CD8-positive, alpha-beta T cell (primary cell): ENCODE measurements at regions of chr16 and their contacts with region 1.

Region 1: GRCh38 chr16:56576585-56577293 is 11.9 kb downstream of the MT4 start:
- DNase-seq: peak; percentile 77 to 91 (median 85)
- ATAC-seq: peak; percentile 99
- H3K4me3 ChIP-seq: no peak overlapping the region
- H3K4me3 Mint-ChIP-seq: no peak overlapping the region
- H3K27ac ChIP-seq: no peak overlapping the region
- H3K27ac Mint-ChIP-seq: peak overlapping the region; percentile 72
- H3K4me1 ChIP-seq: peaks cover 4% of the 10 kb centered on the region
- H3K4me1 Mint-ChIP-seq: peaks cover 8% of the 10 kb centered on the region
- H3K27me3 ChIP-seq: no peaks in the 10 kb centered on the region
- H3K27me3 Mint-ChIP-seq: no peaks in the 10 kb centered on the region
- CTCF ChIP-seq: peak; percentile 82

Region 2: DNA sequence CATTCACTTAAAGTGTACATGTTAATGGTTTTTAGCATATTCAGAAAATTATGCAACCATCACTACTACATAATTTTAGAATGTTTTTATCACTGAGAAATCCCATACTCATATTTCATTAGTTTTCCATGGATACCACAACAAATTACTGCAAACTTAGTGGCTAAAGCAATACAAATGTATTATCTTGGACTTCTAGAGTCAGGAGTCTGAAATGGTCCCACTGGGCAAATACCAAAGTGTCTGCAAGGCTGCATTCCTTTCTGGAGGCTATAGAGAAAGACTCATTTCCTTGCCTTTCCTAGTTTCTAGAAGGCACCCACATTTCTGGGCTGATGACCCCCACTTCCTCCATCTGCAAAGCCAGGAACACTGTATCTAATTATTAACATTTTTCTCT is 402.3 kb before region 1 on chr16:
- CTCF ChIA-PET with region 1: no interaction called
- POLR2A ChIA-PET with region 1: no interaction called
- intact Hi-C with region 1: no loop called
- DNase-seq: no peak
- ATAC-seq: no peak
- H3K4me3 ChIP-seq: no peak overlapping the region
- H3K4me3 Mint-ChIP-seq: no peak overlapping the region
- H3K27ac ChIP-seq: no peak overlapping the region
- H3K27ac Mint-ChIP-seq: no peak overlapping the region
- H3K4me1 ChIP-seq: no peaks in the 10 kb centered on the region
- H3K4me1 Mint-ChIP-seq: no peaks in the 10 kb centered on the region
- H3K27me3 ChIP-seq: no peaks in the 10 kb centered on the region
- H3K27me3 Mint-ChIP-seq: peaks cover 11% of the 10 kb centered on the region
- CTCF ChIP-seq: no peak

Region 3: DNA sequence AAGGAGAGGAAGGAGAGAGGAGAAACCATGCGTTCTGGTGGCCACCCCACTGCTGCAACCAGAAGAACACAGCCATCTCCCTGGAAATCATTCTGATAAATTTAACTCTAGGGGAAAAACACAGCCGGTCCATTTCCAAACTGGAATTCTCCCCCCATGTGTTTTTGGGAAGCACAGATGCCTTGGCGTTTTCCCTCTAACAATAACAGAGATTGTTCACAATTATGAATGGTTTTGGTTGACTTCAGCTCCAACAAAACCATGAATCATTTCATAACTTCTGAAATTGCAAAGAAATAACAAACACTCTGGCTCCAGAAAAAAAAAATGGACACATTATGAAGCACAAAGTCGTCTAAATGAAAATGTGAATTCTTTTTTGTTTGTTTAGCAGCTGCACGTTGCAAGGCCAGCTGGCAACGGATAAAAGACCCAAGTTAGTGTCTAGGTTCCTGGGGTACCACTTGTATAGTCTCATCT is 339.2 kb before region 1 on chr16:
- CTCF ChIA-PET with region 1: no interaction called
- POLR2A ChIA-PET with region 1: no interaction called
- intact Hi-C with region 1: no loop called
- DNase-seq: no peak
- ATAC-seq: no peak
- H3K4me3 ChIP-seq: no peak overlapping the region
- H3K4me3 Mint-ChIP-seq: no peak overlapping the region
- H3K27ac ChIP-seq: no peak overlapping the region
- H3K27ac Mint-ChIP-seq: no peak overlapping the region
- H3K4me1 ChIP-seq: no peaks in the 10 kb centered on the region
- H3K4me1 Mint-ChIP-seq: no peaks in the 10 kb centered on the region
- H3K27me3 ChIP-seq: no peaks in the 10 kb centered on the region
- H3K27me3 Mint-ChIP-seq: no peaks in the 10 kb centered on the region
- CTCF ChIP-seq: no peak

Region 4: GRCh38 chr16:56513972-56514371 is 62.8 kb before region 1 on chr16:
- CTCF ChIA-PET with region 1: interaction called, 12 read pairs
- POLR2A ChIA-PET with region 1: no interaction called
- intact Hi-C with region 1: loop called in 1 of 2 experiments (anchors 2 kb)
- DNase-seq: peak in 8 of 9 experiments; percentile 9 to 76 (median 52)
- ATAC-seq: peak; percentile 94
- H3K4me3 ChIP-seq: no peak overlapping the region
- H3K4me3 Mint-ChIP-seq: no peak overlapping the region
- H3K27ac ChIP-seq: no peak overlapping the region
- H3K27ac Mint-ChIP-seq: peak overlapping the region; percentile 7
- H3K4me1 ChIP-seq: peaks cover 33% of the 10 kb centered on the region
- H3K4me1 Mint-ChIP-seq: peaks cover 58% of the 10 kb centered on the region
- H3K27me3 ChIP-seq: no peaks in the 10 kb centered on the region
- H3K27me3 Mint-ChIP-seq: no peaks in the 10 kb centered on the region
- CTCF ChIP-seq: peak; percentile 80

Region 5: DNA sequence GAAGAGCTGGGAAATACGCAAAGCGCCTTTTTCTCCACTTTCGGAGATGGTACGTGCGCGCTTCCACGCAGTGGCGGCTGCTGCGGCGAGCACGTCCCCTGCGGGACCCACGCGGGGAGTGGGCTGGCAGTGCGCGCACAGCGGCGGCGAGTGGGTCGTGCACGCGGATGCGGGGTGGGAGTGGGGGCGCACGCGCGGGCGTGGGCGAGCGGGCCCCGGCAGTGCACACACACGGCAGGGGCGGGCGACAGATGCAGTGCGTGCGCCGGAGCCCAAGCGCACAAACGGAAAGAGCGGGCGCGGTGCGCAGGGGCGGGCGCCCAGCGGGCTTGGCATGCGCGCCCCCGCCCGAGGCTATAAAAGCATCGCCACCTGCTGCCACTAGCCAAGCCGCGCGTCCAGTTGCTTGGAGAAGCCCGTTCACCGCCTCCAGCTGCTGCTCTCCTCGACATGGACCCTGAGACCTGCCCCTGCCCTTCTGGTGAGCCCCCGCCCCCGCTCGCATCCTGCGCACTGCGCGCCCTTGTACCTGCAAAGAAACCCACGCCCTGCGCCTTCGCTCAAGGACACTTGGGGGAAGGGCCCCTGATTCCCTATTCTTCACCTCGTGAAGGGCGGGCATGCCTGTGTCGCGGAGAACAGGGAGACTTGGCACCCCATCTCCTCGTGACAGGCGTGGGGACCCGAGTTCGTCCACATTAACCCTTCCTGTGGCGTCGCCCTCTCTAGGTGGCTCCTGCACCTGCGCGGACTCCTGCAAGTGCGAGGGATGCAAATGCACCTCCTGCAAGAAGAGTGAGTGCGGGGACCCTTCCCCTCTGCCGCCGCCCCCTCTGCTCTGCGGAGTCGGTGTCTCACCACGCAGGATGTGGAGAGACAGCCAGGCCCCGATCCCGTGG is 12.7 kb after region 1 on chr16 and contains the start of gene MT3:
- CTCF ChIA-PET with region 1: interaction called, 18 read pairs
- POLR2A ChIA-PET with region 1: no interaction called
- intact Hi-C with region 1: no loop called
- DNase-seq: peak in 6 of 9 experiments; percentile 17 to 65 (median 35)
- ATAC-seq: peak; percentile 79
- H3K4me3 ChIP-seq: peak within 1 kb of the TSS; percentile 46 to 84
- H3K4me3 Mint-ChIP-seq: peak within 1 kb of the TSS; percentile 85
- H3K27ac ChIP-seq: no peak within 1 kb of the TSS
- H3K27ac Mint-ChIP-seq: no peak within 1 kb of the TSS
- H3K4me1 ChIP-seq: peaks cover 13% of the 10 kb centered on the region
- H3K4me1 Mint-ChIP-seq: peaks cover 13% of the 10 kb centered on the region
- H3K27me3 ChIP-seq: peaks cover 0 to 3% of the 10 kb centered on the region in 2 experiments
- H3K27me3 Mint-ChIP-seq: peaks cover 17% of the 10 kb centered on the region
- CTCF ChIP-seq: no peak
- total RNA-seq, gene MT3: 1.00 to 1.8 TPM

Region 6: DNA sequence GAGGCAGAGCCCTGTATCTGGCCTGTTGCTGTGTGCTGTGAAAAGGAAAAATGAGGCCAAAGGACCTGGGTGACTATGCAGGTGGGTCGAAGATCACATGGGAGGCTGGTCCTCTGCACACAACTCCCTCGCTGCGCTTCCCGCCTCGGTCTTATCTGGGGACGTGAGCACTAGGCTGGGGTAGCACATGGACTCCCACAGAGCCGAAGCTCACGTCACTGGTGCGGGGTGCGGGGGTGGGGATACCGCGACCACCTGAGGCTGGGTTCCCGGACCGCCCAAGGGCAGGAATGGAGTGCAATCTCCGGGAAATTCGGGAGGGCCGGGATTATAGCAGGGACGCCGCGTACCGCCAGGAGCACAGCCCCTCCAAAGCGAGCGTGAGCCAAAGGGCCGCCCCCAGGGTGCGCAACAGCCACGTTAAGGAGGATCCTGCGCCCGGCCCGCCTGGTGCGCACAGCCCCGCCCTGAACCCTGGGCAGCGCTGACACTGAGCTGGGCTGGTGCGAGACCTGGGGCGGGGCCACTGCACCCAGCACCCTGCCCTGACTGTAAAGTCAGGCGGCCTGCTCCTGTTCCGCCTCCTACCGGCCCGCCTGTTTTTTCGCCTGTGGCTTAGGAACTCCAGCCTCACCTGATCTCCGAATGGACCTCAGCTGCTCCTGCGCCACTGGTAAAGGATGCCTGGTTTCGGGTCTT is 66.5 kb after region 1 on chr16:
- CTCF ChIA-PET with region 1: interaction called, 13 read pairs
- POLR2A ChIA-PET with region 1: no interaction called
- intact Hi-C with region 1: loop called (anchors 1 to 2 kb)
- DNase-seq: peak; percentile 52 to 92 (median 77)
- ATAC-seq: peak; percentile 99
- H3K4me3 ChIP-seq: peak overlapping the region; percentile 33 to 47
- H3K4me3 Mint-ChIP-seq: peak overlapping the region; percentile 71
- H3K27ac ChIP-seq: peak overlapping the region in 1 of 2 experiments; percentile 3
- H3K27ac Mint-ChIP-seq: no peak overlapping the region
- H3K4me1 ChIP-seq: peaks cover 11% of the 10 kb centered on the region
- H3K4me1 Mint-ChIP-seq: peaks cover 23% of the 10 kb centered on the region
- H3K27me3 ChIP-seq: peaks cover 3 to 5% of the 10 kb centered on the region in 2 experiments
- H3K27me3 Mint-ChIP-seq: peaks cover 23% of the 10 kb centered on the region
- CTCF ChIP-seq: peak; percentile 19

Region 7: GRCh38 chr16:56708525-56709442 is 132.0 kb after region 1 on chr16:
- CTCF ChIA-PET with region 1: interaction called, 129 read pairs
- POLR2A ChIA-PET with region 1: interaction called, 11 read pairs
- intact Hi-C with region 1: no loop called
- DNase-seq: peak in 8 of 9 experiments; percentile 32 to 82 (median 58)
- ATAC-seq: peak; percentile 90
- H3K4me3 ChIP-seq: peak overlapping the region; percentile 53 to 65
- H3K4me3 Mint-ChIP-seq: peak overlapping the region; percentile 88
- H3K27ac ChIP-seq: peak overlapping the region; percentile 69 to 76
- H3K27ac Mint-ChIP-seq: peak overlapping the region; percentile 97
- H3K4me1 ChIP-seq: peaks cover 28% of the 10 kb centered on the region
- H3K4me1 Mint-ChIP-seq: peaks cover 62% of the 10 kb centered on the region
- H3K27me3 ChIP-seq: no peaks in the 10 kb centered on the region
- H3K27me3 Mint-ChIP-seq: no peaks in the 10 kb centered on the region
- CTCF ChIP-seq: no peak

Region 8: GRCh38 chr16:56771558-56772279 is 195.0 kb after region 1 on chr16:
- CTCF ChIA-PET with region 1: no interaction called
- POLR2A ChIA-PET with region 1: no interaction called
- intact Hi-C with region 1: no loop called
- DNase-seq: no peak
- ATAC-seq: no peak
- H3K4me3 ChIP-seq: no peak overlapping the region
- H3K4me3 Mint-ChIP-seq: no peak overlapping the region
- H3K27ac ChIP-seq: no peak overlapping the region
- H3K27ac Mint-ChIP-seq: no peak overlapping the region
- H3K4me1 ChIP-seq: no peaks in the 10 kb centered on the region
- H3K4me1 Mint-ChIP-seq: peaks cover 35% of the 10 kb centered on the region
- H3K27me3 ChIP-seq: no peaks in the 10 kb centered on the region
- H3K27me3 Mint-ChIP-seq: no peaks in the 10 kb centered on the region
- CTCF ChIP-seq: no peak

Region 9: GRCh38 chr16:56866943-56867830 is 290.4 kb after region 1 on chr16:
- CTCF ChIA-PET with region 1: interaction called, 8 read pairs
- POLR2A ChIA-PET with region 1: no interaction called
- intact Hi-C with region 1: loop called in 1 of 2 experiments (anchors 1 kb)
- DNase-seq: peak in 6 of 9 experiments; percentile 11 to 73 (median 50)
- ATAC-seq: peak; percentile 58
- H3K4me3 ChIP-seq: no peak overlapping the region
- H3K4me3 Mint-ChIP-seq: no peak overlapping the region
- H3K27ac ChIP-seq: no peak overlapping the region
- H3K27ac Mint-ChIP-seq: no peak overlapping the region
- H3K4me1 ChIP-seq: peaks cover 13% of the 10 kb centered on the region
- H3K4me1 Mint-ChIP-seq: peaks cover 21% of the 10 kb centered on the region
- H3K27me3 ChIP-seq: no peaks in the 10 kb centered on the region
- H3K27me3 Mint-ChIP-seq: no peaks in the 10 kb centered on the region
- CTCF ChIP-seq: peak; percentile 82